ENCODE measurements at regions of chr3 and their contacts with region 1.

Region 1: DNA sequence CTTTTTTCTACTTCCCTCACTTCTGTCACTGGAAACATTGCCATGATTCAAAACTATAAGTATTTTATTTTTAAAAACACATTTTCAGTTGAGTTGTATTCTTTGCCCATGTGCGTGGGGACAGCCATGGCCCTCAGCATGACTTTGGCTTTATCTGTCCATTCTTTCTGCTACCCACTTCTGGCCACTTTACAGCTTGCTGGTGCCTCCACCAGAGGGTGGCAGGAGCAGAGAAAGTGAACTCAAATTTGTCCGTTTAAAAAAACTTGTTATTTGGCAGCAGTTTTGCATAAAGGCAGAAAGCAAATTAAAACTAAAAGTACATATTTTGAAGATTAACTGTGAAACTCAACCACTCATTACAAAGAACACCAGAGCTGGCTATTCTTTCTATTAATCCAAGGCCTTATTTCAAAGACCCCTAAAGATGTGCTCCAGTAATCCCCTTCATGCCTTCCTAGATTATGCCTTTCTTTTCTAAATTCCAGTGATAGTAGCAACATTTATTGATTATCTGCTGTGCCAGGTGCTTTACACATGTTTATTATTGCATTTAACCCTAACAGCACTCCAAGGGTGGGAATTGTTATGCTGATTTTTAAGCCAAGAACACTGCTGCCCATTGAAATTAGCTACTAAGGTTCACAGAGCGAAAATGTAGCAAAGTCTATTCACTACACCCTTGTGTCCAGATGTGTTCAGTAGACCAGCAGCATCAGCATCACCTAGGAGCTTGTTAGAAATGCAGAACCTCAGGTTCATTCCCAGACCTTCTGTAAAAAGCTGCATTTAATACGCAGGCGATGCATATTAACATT is 134.8 kb downstream of the THRB start:
- DNase-seq: no peak
- ATAC-seq: no peak
- H3K4me3 ChIP-seq: no peak overlapping the region
- H3K27ac ChIP-seq: no peak overlapping the region
- H3K4me1 ChIP-seq: peaks cover 0 to 35% (median 13%) of the 10 kb centered on the region in 9 donors
- H3K27me3 ChIP-seq: no peaks in the 10 kb centered on the region
- CTCF ChIP-seq: peak in 5 of 9 donors; percentile 23 to 46 (median 39)

Region 2: DNA sequence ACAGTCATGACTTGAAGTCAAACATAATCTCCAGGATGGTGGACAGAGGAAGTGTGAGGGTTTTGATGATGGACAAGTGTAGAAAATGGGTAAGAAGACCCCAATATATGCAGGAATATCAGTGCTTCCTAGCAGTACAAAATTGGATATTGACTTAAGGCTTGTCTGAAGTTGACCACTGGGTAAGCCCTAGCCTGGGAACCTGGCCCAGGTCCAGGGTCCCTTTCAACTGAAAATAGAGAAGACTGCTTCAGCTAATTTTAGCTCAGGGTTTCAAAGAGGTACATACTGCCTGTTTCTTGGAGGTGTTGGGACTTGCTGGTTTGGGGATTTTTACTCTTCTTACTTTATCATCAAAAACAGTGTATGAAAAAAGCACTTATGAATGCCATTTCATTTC is 410.1 kb before region 1 on chr3:
- intact Hi-C with region 1: no loop called
- DNase-seq: peak; percentile 58 to 63
- ATAC-seq: no peak
- H3K4me3 ChIP-seq: peak overlapping the region in 5 of 10 donors; percentile 3 to 31 (median 19)
- H3K27ac ChIP-seq: peak overlapping the region in 8 of 10 donors; percentile 1 to 100 (median 30)
- H3K4me1 ChIP-seq: peaks cover 23 to 87% (median 83%) of the 10 kb centered on the region in 9 donors
- H3K27me3 ChIP-seq: no peaks in the 10 kb centered on the region
- CTCF ChIP-seq: no peak

Region 3: DNA sequence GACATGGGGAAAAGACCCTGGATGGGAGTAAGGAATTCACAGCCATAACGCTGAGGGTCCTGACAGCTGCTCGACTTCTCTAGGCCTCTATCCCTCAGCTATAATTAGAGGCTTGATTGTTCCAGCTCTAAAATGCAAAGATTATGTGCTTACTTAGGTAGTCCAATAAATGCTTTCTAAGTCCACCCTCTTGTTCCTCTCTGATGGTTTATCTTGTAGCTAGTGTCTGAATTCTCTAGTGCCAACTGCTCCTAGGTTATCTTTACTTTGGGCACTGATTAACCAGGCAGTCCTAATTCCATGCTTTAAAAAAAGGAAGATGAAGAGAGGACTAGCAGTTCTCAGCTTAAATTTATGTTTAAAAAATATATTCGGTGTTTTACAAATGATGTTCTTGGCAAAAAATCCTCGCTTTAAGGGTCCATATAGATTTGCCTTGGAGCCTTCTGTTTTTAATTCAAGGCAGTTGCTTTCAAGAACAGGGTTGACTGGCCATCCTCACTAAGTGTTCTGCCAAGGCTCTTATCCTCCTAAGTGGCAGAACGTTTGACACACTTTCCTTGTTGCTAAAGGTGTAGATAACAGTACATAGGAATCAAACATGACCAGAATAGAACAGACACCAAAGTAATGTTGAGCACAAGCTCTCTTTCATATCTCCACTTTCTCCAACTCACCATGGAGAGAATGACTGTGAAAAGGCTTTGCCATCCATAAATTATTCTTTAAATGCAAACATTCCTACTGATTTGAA is 74.2 kb after region 1 on chr3:
- intact Hi-C with region 1: loop called in 1 of 10 experiments (anchors 5 kb)
- DNase-seq: peak in 1 of 2 donors; percentile 19
- ATAC-seq: peak; percentile 66 to 97 (median 91)
- H3K4me3 ChIP-seq: no peak overlapping the region
- H3K27ac ChIP-seq: peak overlapping the region; percentile 9 to 79 (median 64)
- H3K4me1 ChIP-seq: peaks cover 0 to 37% (median 18%) of the 10 kb centered on the region in 9 donors
- H3K27me3 ChIP-seq: no peaks in the 10 kb centered on the region
- CTCF ChIP-seq: no peak

Region 4: DNA sequence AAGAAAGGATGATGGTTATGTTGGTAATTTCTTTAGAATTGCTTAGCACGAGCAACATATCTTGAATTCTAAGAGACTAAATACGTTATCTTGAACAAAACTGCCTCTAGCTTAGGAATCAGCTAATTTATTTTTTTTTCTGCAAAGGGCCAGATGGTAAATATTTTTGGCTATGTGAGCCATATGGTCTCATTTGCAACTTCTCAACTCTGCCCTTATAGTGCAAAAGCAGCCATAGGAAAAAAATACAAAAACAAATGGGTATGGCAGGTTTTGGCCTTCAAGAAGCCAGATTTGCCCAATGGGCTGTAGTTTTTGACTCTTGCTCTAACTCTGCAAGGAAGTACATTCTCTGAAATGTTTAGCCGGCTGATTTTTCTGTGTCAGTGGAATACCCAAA is 1441.9 kb after region 1 on chr3:
- intact Hi-C with region 1: no loop called
- DNase-seq: no peak
- ATAC-seq: no peak
- H3K4me3 ChIP-seq: no peak overlapping the region
- H3K27ac ChIP-seq: no peak overlapping the region
- H3K4me1 ChIP-seq: no peaks in the 10 kb centered on the region
- H3K27me3 ChIP-seq: peaks cover 0 to 14% (median 3%) of the 10 kb centered on the region in 7 donors
- CTCF ChIP-seq: no peak

Measured in heart right ventricle (tissue), 16 donors.